Activated naive CD8-positive, alpha-beta T cell treated with anti-CD3 and anti-CD28 coated beads, Interleukin-2, amount 10 ng/mL, durations not matched to agents 7 days and 5 days (primary cell): ENCODE measurements at regions of chr10 and their contacts with region 1.

Region 1: GRCh38 chr10:73848821-73849489 is 25.4 kb downstream of the CAMK2G start:
- DNase-seq: peak; percentile 95
- ATAC-seq: peak; percentile 98
- H3K4me3 Mint-ChIP-seq: peak overlapping the region; percentile 47
- H3K27ac Mint-ChIP-seq: peak overlapping the region; percentile 50
- H3K4me1 Mint-ChIP-seq: peaks cover 15% of the 10 kb centered on the region
- H3K27me3 Mint-ChIP-seq: no peaks in the 10 kb centered on the region

Region 2: DNA sequence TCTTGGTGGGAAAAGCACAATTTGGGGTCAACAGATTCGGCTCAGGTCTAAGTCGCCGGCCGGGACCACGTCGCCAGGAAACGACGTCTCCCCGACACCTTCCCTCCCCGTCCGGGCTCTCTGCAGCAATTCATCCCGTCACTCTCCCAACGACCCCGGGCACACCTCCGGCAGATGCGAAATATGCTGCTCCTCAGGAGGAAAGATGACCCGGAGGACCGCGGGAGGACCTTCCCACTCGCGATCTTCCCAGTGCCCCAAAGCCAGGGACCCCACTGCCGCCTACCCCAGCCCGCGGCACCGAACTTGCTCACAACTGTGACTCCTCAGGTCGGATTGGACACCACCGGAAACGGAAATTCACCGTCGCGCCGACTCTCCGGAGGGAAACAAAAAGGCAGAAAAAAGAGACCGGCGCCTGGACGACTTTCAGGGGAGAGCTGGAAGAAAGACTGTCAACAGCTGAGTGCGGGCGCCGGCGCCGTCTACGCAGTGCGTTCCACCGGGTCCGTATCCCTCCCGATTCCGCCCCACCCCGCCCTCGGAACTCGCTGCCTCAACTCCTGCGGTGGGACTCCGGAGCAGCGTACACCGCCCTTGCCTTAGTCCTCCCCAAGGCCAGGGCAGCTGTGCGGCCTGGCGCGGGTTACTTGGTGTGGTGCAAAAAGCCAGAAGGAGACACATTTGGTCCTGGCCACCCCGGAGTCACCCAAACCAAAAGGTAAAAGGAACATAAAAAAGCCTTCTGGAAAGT is 118.6 kb before region 1 on chr10:
- POLR2A ChIA-PET with region 1: no interaction called
- DNase-seq: peak; percentile 94
- ATAC-seq: peak; percentile 92
- H3K4me3 Mint-ChIP-seq: peak overlapping the region; percentile 99
- H3K27ac Mint-ChIP-seq: peak overlapping the region; percentile 97
- H3K4me1 Mint-ChIP-seq: peaks cover 15% of the 10 kb centered on the region
- H3K27me3 Mint-ChIP-seq: no peaks in the 10 kb centered on the region

Region 3: GRCh38 chr10:73772280-73773151 is 76.4 kb before region 1 on chr10:
- POLR2A ChIA-PET with region 1: no interaction called
- DNase-seq: peak; percentile 90
- ATAC-seq: peak; percentile 76
- H3K4me3 Mint-ChIP-seq: peak overlapping the region; percentile 91
- H3K27ac Mint-ChIP-seq: peak overlapping the region; percentile 95
- H3K4me1 Mint-ChIP-seq: peaks cover 51% of the 10 kb centered on the region
- H3K27me3 Mint-ChIP-seq: no peaks in the 10 kb centered on the region

Region 4: GRCh38 chr10:73791871-73792400 is 57.0 kb before region 1 on chr10:
- POLR2A ChIA-PET with region 1: no interaction called
- DNase-seq: no peak
- ATAC-seq: no peak
- H3K4me3 Mint-ChIP-seq: no peak overlapping the region
- H3K27ac Mint-ChIP-seq: no peak overlapping the region
- H3K4me1 Mint-ChIP-seq: peaks cover 10% of the 10 kb centered on the region
- H3K27me3 Mint-ChIP-seq: no peaks in the 10 kb centered on the region

Region 5: DNA sequence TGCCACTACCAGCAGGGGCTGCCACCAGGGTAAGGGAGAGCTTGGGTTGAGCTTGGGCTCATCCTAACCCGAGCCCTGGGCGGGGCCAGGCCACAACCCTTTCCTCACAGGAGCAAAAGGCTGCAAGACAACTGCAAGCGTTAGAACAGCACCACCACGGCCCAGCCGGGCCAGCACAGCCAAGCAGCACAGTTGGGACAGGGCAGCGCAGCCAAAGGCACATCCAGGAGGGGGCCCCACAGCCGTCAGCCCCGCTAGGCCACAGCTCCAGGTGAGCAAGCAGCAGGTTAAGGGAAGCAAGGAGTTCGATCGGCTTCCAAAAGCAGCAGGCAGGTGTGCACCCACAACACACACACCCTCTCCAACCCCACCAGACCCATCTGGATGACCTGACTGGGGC is 30.6 kb before region 1 on chr10:
- POLR2A ChIA-PET with region 1: no interaction called
- DNase-seq: no peak
- ATAC-seq: no peak
- H3K4me3 Mint-ChIP-seq: no peak overlapping the region
- H3K27ac Mint-ChIP-seq: no peak overlapping the region
- H3K4me1 Mint-ChIP-seq: peaks cover 4% of the 10 kb centered on the region
- H3K27me3 Mint-ChIP-seq: no peaks in the 10 kb centered on the region

Region 6: DNA sequence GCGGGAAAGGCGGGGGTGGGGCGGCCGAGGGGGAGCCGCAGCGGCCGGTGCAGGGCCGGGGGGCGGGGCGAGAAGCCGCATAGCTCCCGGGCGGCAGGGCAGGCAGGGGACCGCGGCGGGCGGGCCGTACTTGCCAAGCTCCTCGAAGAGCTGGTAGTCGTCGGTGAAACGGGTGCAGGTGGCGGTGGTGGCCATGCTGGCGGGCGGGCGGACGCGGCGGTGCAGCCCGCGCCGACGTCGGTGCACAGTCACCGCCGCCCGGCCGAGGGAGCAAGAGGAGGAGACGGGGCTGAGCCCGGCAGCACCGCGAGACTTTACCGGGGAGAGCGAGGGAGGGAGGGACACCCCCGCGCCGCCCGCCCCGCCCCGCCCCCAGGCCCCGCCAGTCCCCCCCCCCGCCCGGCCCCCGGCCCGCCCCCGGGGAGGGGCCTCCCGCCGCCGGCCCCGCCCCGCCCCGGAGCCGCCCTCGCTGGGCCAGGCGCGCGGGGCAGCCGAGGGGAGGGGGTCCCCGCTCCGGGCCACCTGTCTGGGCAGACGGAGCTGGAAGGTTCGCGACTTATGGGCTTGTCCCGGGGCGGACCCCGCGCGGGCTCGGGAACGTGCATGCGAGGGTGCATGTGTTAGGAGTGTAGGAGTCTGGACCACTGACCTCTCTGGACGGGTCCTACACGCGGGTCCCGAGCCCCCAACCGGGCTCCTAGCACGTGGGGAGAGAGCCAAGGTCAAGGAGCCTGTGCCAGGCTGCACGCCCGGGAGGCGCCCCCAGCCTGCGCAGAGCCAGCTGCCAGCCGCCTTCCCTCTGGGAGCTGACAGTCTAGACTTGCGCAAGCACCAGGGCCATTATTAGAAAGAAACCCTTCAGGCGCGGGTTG is 25.5 kb after region 1 on chr10 and contains the start of gene CAMK2G:
- POLR2A ChIA-PET with region 1: interaction called, 20 read pairs
- DNase-seq: peak; percentile 86
- ATAC-seq: peak; percentile 88
- H3K4me3 Mint-ChIP-seq: peak within 1 kb of the TSS; percentile 95
- H3K27ac Mint-ChIP-seq: peak within 1 kb of the TSS; percentile 79
- H3K4me1 Mint-ChIP-seq: peaks cover 55% of the 10 kb centered on the region
- H3K27me3 Mint-ChIP-seq: no peaks in the 10 kb centered on the region
- total RNA-seq, gene CAMK2G: 48.6 to 53.5 TPM

Region 7: DNA sequence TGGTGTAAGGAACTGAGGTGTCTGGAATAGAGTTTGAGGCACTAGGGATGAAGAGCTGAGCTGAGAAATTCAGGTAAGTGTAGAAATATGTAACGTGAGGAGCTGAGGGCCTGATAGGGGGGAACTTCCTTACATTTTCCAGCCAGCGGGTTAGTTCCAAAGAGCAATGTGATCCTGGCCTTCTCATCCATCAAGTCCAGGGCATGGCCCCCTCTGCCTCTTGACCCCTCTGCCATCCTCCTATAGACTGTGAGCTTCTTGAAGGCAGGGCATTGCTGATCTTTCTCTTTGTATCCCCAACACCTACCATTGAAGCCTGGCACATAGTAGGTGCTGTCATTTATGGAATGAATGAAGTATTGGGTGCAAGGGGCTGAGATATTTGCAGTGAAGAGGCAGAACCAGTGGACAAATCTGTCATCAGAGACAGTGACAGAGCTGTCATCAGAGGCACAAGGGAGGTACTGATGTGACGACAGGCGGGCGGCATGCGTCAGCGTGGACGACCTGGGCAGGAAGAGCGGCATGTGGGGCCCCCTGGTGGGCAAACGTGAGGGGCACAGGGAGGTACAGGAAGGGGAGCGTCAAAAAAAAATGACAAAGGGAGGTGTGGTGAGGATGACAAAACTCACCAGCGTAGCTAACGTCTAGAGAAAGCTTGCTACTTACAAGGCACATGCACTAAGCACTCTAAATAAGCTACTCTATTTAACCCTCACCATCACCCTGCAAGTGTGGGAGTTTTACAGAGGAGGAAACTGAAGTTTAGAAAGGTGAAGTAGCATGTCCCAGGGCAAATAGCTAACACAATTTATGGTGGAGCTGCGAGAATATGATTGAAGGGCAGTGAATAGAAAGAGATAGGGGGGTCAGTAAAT is 30.6 kb after region 1 on chr10:
- POLR2A ChIA-PET with region 1: interaction called, 20 read pairs
- DNase-seq: peak; percentile 96
- ATAC-seq: peak; percentile 92
- H3K4me3 Mint-ChIP-seq: peak overlapping the region; percentile 1
- H3K27ac Mint-ChIP-seq: peak overlapping the region; percentile 59
- H3K4me1 Mint-ChIP-seq: peaks cover 44% of the 10 kb centered on the region
- H3K27me3 Mint-ChIP-seq: peaks cover 5% of the 10 kb centered on the region